Activated CD8-positive, alpha-beta T cell treated with anti-CD3 and anti-CD28 coated beads for 36 hours (primary cell): ENCODE measurements at regions of chr19 and their contacts with region 1.

Region 1: DNA sequence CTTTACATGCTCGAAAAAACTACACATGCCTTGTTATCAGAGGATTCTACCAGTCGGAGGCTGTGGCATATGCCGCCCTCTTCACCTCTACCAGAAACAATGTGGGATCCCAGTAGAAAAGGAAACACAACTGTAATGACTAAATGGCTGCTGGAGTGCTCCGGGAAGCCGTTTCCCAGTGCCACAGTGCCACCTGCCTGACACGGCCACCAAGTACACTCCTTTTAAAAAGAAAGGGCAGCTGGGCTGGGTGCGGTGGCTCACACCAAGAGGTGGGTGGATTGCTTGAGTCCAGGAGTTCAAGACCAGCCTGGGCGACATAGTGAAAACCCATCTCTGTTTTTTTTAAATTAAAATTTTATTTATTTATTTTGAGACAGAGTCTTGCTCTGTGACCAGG is 67.3 kb downstream of the TRPM4 start:
- DNase-seq: peak; percentile 65
- ATAC-seq: peak; percentile 67
- H3K4me3 Mint-ChIP-seq: no peak overlapping the region
- H3K27ac Mint-ChIP-seq: no peak overlapping the region
- H3K4me1 Mint-ChIP-seq: peaks cover 4% of the 10 kb centered on the region
- H3K27me3 Mint-ChIP-seq: peaks cover 10% of the 10 kb centered on the region
- CTCF ChIP-seq: peak; percentile 42

Region 2: DNA sequence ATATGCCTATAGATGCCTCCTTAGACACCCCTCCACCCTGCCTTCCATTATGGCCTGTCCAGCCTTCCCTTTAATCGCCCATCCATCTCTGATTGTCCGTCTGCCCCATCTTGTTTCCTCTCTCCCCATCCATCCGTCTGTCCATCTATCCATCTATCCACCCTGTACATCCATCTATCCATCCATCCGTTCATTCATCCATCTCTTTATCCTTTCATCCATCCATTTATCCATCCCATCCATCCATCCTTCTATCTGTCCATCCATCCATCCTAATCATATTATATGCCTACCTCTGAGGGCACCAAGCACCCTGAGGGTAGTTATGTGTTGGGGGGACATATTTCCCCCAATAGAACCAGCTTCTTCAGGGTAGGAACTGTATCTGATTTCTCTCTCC is 44.2 kb before region 1 on chr19:
- CTCF ChIA-PET with region 1: no interaction called
- POLR2A ChIA-PET with region 1: no interaction called
- intact Hi-C with region 1: no loop called
- DNase-seq: no peak
- ATAC-seq: no peak
- H3K4me3 Mint-ChIP-seq: no peak overlapping the region
- H3K27ac Mint-ChIP-seq: no peak overlapping the region
- H3K4me1 Mint-ChIP-seq: peaks cover 4% of the 10 kb centered on the region
- H3K27me3 Mint-ChIP-seq: no peaks in the 10 kb centered on the region
- CTCF ChIP-seq: no peak

Region 3: GRCh38 chr19:49210108-49210900 is 14.6 kb before region 1 on chr19:
- CTCF ChIA-PET with region 1: interaction called, 19 read pairs
- POLR2A ChIA-PET with region 1: no interaction called
- intact Hi-C with region 1: no loop called
- DNase-seq: peak; percentile 64
- ATAC-seq: peak; percentile 95
- H3K4me3 Mint-ChIP-seq: peak overlapping the region; percentile 41
- H3K27ac Mint-ChIP-seq: no peak overlapping the region
- H3K4me1 Mint-ChIP-seq: peaks cover 15% of the 10 kb centered on the region
- H3K27me3 Mint-ChIP-seq: peaks cover 2% of the 10 kb centered on the region
- CTCF ChIP-seq: peak; percentile 16

Region 4: GRCh38 chr19:49243129-49243528 is 18.3 kb after region 1 on chr19:
- CTCF ChIA-PET with region 1: interaction called, 10 read pairs
- POLR2A ChIA-PET with region 1: no interaction called
- intact Hi-C with region 1: no loop called
- DNase-seq: no peak
- ATAC-seq: no peak
- H3K4me3 Mint-ChIP-seq: no peak overlapping the region
- H3K27ac Mint-ChIP-seq: no peak overlapping the region
- H3K4me1 Mint-ChIP-seq: no peaks in the 10 kb centered on the region
- H3K27me3 Mint-ChIP-seq: peaks cover 5% of the 10 kb centered on the region
- CTCF ChIP-seq: no peak